ENCODE measurements at regions of chr3 and their contacts with region 1.

Region 1: GRCh38 chr3:194556086-194557056 is 69.6 kb upstream of the ATP13A3 start:
- DNase-seq: peak; percentile 17
- H3K4me3 ChIP-seq: peak overlapping the region in 3 of 4 donors; percentile 10 to 28 (median 21)
- H3K27ac ChIP-seq: no peak overlapping the region
- H3K4me1 ChIP-seq: no peaks in the 10 kb centered on the region
- H3K27me3 ChIP-seq: no peaks in the 10 kb centered on the region
- CTCF ChIP-seq: no peak
- EP300 ChIP-seq: no peak
- POLR2A ChIP-seq: no peak

Region 2: DNA sequence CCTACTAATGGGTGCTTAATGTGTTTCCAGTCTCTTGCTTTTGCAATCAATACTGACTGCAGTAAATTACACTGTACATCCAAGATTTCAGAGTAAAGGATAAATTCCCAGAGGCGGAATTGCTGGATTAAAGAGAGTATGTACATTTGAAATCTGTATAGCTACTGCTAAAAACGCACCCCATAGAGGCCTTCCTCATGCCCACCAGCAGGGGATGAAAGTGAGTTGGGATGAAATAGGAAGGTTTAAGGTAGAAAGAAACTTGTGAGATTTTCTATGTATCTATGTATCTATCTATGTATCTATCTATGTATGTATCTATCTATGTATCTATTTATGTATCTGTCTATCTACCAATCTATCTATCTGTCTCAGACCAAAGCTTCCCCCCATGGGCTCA is 48.5 kb after region 1 on chr3:
- in situ Hi-C with region 1: no loop called
- intact Hi-C with region 1: no loop called
- DNase-seq: no peak
- H3K4me3 ChIP-seq: no peak overlapping the region
- H3K27ac ChIP-seq: no peak overlapping the region
- H3K4me1 ChIP-seq: no peaks in the 10 kb centered on the region
- H3K27me3 ChIP-seq: no peaks in the 10 kb centered on the region
- CTCF ChIP-seq: no peak
- EP300 ChIP-seq: no peak
- POLR2A ChIP-seq: no peak

Region 3: DNA sequence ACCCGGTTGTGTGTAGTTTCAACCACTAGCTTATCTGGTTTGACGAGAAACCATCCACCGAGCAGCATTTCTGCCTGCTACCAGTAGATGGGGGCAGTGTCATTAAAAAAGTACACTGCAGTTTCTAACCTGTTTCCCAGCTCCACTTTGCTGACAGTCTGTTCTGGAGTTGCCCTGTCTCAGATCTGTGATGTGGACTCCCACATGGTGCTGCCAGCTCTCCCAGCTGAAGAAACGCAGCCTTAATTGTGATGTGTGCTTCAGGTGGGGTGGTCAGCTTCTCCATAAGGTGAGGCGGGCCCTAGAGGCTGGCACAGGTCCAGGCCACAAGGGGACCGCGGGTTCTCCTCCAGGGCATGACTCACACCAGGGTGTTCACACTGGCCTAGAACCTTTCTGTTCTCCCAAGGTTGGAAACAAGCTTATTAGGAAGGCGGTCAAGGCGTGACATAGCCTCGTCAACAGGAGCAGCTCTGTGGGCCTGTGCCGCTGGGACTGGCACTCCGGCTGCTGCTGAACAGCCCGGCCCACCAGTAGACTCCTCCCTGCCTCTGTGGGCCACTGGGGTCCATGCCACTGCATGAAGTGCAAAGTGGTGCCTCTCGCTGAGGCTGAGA is 126.4 kb after region 1 on chr3:
- in situ Hi-C with region 1: no loop called
- intact Hi-C with region 1: no loop called
- DNase-seq: peak; percentile 79
- H3K4me3 ChIP-seq: no peak overlapping the region
- H3K27ac ChIP-seq: peak overlapping the region in 3 of 4 donors; percentile 26 to 52 (median 37)
- H3K4me1 ChIP-seq: peaks cover 0 to 32% (median 23%) of the 10 kb centered on the region in 4 donors
- H3K27me3 ChIP-seq: no peaks in the 10 kb centered on the region
- CTCF ChIP-seq: peak; percentile 70 to 94 (median 82)
- EP300 ChIP-seq: no peak
- POLR2A ChIP-seq: no peak

Region 4: GRCh38 chr3:194800002-194800401 is 243.6 kb after region 1 on chr3:
- in situ Hi-C with region 1: no loop called
- intact Hi-C with region 1: no loop called
- DNase-seq: no peak
- H3K4me3 ChIP-seq: no peak overlapping the region
- H3K27ac ChIP-seq: no peak overlapping the region
- H3K4me1 ChIP-seq: no peaks in the 10 kb centered on the region
- H3K27me3 ChIP-seq: peaks cover 4% of the 10 kb centered on the region
- CTCF ChIP-seq: no peak
- EP300 ChIP-seq: no peak
- POLR2A ChIP-seq: no peak

Region 5: GRCh38 chr3:195512798-195513345 is 956.5 kb after region 1 on chr3:
- in situ Hi-C with region 1: no loop called
- intact Hi-C with region 1: loop called (anchors 10 kb)
- DNase-seq: no peak
- H3K4me3 ChIP-seq: no peak overlapping the region
- H3K27ac ChIP-seq: no peak overlapping the region
- H3K4me1 ChIP-seq: peaks cover 0 to 23% (median 6%) of the 10 kb centered on the region in 4 donors
- H3K27me3 ChIP-seq: no peaks in the 10 kb centered on the region
- CTCF ChIP-seq: no peak
- EP300 ChIP-seq: no peak
- POLR2A ChIP-seq: no peak